ENCODE measurements at regions of chr13 and their contacts with region 1.

Region 1: DNA sequence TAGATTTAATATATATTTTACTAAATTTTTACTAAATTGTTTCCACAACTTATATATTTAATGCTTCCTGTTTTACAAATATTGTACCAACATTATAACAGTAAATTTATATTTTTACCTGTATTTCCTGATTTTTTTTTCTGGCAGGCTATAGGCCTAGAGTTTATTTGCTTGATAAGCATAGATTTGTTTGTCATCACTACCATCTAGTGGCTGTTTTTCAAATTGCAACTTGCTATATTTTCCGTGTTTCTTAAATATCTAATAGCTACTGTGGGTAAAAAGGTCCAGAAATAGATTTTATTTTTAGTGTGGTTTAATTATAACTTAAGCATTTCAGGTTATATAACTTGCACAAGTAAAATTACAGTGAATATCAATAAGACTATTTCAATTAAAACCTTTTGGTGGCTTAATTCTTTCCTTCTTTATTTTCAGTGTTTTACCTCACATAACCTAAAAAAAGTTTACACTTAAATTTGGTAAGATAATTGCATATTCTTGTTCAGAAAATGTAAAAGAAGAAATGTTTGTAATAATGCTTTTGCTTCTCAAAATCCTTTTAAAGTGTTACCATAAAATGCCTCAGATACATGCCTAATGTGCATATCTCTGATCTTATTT is 60.6 kb downstream of the NDFIP2 start:
- DNase-seq: peak in 2 of 4 donors; percentile 49 to 68
- ATAC-seq: peak; percentile 76
- H3K4me3 ChIP-seq: no peak overlapping the region
- H3K27ac ChIP-seq: no peak overlapping the region
- H3K4me1 ChIP-seq: no peaks in the 10 kb centered on the region
- H3K27me3 ChIP-seq: no peaks in the 10 kb centered on the region
- CTCF ChIP-seq: peak; percentile 59 to 78

Region 2: GRCh38 chr13:79423801-79424642 is 117.5 kb before region 1 on chr13:
- intact Hi-C with region 1: loop called in 1 of 2 experiments (anchors 5 kb)
- DNase-seq: peak in 1 of 4 donors; percentile 42
- ATAC-seq: peak; percentile 73
- H3K4me3 ChIP-seq: no peak overlapping the region
- H3K27ac ChIP-seq: no peak overlapping the region
- H3K4me1 ChIP-seq: no peaks in the 10 kb centered on the region
- H3K27me3 ChIP-seq: no peaks in the 10 kb centered on the region
- CTCF ChIP-seq: peak; percentile 47 to 58